ENCODE measurements at regions of chr7 and their contacts with region 1.

Region 1: DNA sequence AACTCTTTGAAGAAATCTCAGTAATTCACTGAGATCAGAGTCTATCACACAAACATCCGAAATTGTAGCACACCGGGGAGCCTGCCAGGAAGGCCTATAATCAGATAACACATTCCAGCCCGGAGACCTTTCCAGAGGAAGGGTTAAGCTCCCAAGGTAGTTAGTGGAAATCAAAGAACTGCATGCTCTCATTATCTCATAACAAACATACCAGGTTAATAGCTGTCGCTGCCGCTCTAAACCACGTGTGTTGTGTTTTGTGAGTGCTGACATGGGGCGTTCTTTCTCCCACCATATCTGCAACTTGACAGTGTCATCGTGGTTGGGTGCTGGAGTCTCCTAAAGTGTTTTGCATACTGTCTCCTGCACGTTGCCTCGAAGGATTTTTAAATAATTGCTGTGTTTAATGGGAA is 120.7 kb upstream of the CARD11 start:
- DNase-seq: peak; percentile 62 to 91
- H3K4me3 ChIP-seq: no peak overlapping the region
- H3K27ac ChIP-seq: peak overlapping the region; percentile 56
- H3K4me1 ChIP-seq: peaks cover 22% of the 10 kb centered on the region
- H3K27me3 ChIP-seq: no peaks in the 10 kb centered on the region
- CTCF ChIP-seq: no peak

Region 2: DNA sequence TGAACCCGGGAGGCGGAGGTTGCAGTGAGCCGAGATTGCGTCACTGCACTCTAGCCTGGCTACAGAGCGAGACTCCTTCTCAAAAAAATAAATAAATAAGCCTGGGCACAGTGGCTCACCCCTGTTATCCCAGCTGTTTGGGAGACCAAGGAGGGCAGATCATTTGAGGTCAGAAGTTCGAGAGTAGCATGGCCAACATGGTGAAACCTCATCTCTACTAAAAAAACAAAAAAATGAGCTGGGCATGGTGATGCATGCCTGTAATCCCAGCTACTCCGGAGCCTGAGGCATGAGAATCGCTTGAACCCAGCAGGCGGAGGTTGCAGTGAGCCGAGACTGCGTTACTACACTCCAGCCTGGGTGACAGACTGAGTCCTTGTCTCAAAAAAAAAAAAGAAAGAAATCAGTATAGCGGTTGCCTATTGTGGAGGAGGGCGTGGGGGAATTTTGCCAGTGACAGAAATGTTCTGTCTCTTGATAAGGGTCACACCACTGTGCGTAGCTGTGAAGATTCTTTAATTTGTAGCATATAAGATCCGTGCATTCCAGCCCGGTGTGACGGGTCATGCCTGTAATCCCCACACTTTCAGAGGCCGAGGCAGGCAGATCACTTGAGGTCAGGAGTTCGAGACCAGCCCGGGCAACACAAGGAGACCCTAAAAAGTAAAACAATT is 827.6 kb before region 1 on chr7:
- CTCF ChIA-PET with region 1: interaction called, 12 read pairs
- POLR2A ChIA-PET with region 1: no interaction called
- intact Hi-C with region 1: no loop called
- DNase-seq: no peak
- H3K4me3 ChIP-seq: no peak overlapping the region
- H3K27ac ChIP-seq: no peak overlapping the region
- H3K4me1 ChIP-seq: no peaks in the 10 kb centered on the region
- H3K27me3 ChIP-seq: no peaks in the 10 kb centered on the region
- CTCF ChIP-seq: no peak

Region 3: GRCh38 chr7:3867863-3868262 is 703.5 kb after region 1 on chr7:
- CTCF ChIA-PET with region 1: interaction called, 12 read pairs
- POLR2A ChIA-PET with region 1: no interaction called
- intact Hi-C with region 1: no loop called
- DNase-seq: no peak
- H3K4me3 ChIP-seq: no peak overlapping the region
- H3K27ac ChIP-seq: no peak overlapping the region
- H3K4me1 ChIP-seq: no peaks in the 10 kb centered on the region
- H3K27me3 ChIP-seq: peaks cover 56% of the 10 kb centered on the region
- CTCF ChIP-seq: no peak